ENCODE measurements at regions of chr4 and their contacts with region 1.

Region 1: DNA sequence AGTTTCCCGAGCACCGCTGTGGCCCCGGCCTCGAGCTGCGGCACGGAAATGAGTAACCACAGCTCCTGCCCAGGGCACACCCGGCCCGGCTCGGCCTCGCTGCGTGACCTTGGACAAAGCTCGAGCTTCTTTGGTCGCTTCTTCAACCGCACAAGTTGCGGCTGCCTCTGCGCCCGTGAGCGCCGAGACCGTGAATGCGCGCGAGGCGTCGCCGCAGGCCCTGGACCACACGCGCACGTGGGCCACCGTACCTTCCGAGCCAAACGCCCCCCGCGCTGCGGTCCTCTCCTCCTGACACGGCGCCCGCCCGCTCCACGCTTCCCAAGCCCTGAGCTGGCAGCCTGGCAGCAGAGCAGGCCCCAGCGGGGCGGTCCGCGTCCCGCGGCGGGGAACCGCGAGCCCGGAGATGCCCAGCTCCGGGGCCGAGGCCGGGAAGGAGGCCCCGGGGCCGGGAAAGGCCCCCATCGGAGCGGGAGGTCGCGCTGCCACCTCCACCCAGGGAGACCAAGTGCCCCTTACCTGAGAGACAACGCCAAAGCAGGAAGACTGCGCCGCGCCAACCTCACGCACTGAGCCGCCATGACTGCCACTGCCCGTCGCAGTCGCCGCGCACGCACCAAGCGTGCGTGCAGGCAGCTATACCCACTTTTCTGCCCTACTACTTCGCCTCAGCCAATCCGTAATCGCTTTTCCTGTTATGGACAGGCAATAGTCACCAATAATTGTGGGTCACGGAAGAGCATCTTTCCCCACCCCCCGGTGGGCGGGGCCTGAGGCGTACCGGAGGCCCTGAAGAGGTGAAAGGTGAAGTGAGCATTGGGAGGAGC is at the start of gene GRPEL1:
- DNase-seq: peak; percentile 100
- ATAC-seq: peak; percentile 94 to 97 (median 96)
- H3K4me3 ChIP-seq: peak within 1 kb of the TSS; percentile 84
- H3K27ac ChIP-seq: peak within 1 kb of the TSS; percentile 93
- H3K4me1 ChIP-seq: peaks cover 23% of the 10 kb centered on the region
- H3K27me3 ChIP-seq: no peaks in the 10 kb centered on the region
- CTCF ChIP-seq: no peak
- total RNA-seq, gene GRPEL1: 41.4 to 66.1 (median 57.8) TPM

Region 2: DNA sequence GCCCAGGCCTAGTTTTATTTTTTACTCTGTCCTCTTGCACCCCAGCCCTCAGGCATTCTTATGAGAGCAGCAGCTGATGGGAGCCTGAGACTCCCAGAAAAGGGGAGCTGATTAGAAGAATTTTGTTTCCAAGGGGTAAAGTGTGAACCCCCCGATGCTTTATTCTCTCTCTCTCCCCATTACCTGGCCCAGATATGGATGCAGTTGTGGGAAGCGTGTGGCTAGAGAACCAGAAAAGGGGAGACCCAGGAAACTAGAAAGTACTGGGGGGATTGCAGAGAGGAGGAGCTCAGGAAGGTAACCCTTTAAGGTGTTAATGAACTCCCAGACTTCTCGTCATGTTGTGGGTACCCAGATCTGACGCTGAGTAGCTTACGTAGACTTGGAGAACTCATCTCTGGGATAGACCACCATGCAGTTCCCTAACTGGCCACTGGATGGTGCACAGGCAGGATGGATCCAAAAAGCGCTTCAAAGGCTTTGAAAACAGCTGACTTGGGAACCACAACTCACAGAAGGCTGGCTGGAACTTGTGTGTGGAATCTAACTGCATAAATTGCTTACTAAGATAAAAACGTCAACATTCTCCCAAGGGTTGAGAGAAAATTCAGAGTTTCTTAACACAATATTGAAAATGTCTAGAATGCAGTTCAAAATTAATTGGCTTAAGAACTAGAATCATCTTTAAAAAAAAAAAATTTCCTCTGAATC is 93.4 kb before region 1 on chr4:
- intact Hi-C with region 1: loop called (anchors 5 kb)
- DNase-seq: peak; percentile 80 to 88
- ATAC-seq: peak; percentile 86 to 92 (median 90)
- H3K4me3 ChIP-seq: no peak overlapping the region
- H3K27ac ChIP-seq: peak overlapping the region; percentile 30
- H3K4me1 ChIP-seq: peaks cover 41% of the 10 kb centered on the region
- H3K27me3 ChIP-seq: no peaks in the 10 kb centered on the region
- CTCF ChIP-seq: peak; percentile 98

Region 3: GRCh38 chr4:7021930-7022658 is 45.6 kb before region 1 on chr4:
- intact Hi-C with region 1: no loop called
- DNase-seq: peak in 1 of 2 donors; percentile 9
- ATAC-seq: peak; percentile 45 to 82 (median 56)
- H3K4me3 ChIP-seq: no peak overlapping the region
- H3K27ac ChIP-seq: no peak overlapping the region
- H3K4me1 ChIP-seq: no peaks in the 10 kb centered on the region
- H3K27me3 ChIP-seq: no peaks in the 10 kb centered on the region
- CTCF ChIP-seq: no peak

Region 4: GRCh38 chr4:7042697-7043464 is 24.8 kb before region 1 on chr4 and contains the start of gene TADA2B:
- intact Hi-C with region 1: loop called in 1 of 2 experiments (anchors 1 kb)
- DNase-seq: peak; percentile 98 to 99
- ATAC-seq: peak; percentile 88 to 95 (median 90)
- H3K4me3 ChIP-seq: peak within 1 kb of the TSS; percentile 99
- H3K27ac ChIP-seq: peak within 1 kb of the TSS; percentile 94
- H3K4me1 ChIP-seq: peaks cover 49% of the 10 kb centered on the region
- H3K27me3 ChIP-seq: no peaks in the 10 kb centered on the region
- CTCF ChIP-seq: peak; percentile 54
- total RNA-seq, gene TADA2B: 43.0 to 70.3 (median 54.7) TPM

Measured in psoas muscle (tissue), 8 donors.